Activated CD8-positive, alpha-beta T cell treated with anti-CD3 and anti-CD28 coated beads for 36 hours (primary cell): ENCODE measurements at regions of chr2 and their contacts with region 1.

Region 1: DNA sequence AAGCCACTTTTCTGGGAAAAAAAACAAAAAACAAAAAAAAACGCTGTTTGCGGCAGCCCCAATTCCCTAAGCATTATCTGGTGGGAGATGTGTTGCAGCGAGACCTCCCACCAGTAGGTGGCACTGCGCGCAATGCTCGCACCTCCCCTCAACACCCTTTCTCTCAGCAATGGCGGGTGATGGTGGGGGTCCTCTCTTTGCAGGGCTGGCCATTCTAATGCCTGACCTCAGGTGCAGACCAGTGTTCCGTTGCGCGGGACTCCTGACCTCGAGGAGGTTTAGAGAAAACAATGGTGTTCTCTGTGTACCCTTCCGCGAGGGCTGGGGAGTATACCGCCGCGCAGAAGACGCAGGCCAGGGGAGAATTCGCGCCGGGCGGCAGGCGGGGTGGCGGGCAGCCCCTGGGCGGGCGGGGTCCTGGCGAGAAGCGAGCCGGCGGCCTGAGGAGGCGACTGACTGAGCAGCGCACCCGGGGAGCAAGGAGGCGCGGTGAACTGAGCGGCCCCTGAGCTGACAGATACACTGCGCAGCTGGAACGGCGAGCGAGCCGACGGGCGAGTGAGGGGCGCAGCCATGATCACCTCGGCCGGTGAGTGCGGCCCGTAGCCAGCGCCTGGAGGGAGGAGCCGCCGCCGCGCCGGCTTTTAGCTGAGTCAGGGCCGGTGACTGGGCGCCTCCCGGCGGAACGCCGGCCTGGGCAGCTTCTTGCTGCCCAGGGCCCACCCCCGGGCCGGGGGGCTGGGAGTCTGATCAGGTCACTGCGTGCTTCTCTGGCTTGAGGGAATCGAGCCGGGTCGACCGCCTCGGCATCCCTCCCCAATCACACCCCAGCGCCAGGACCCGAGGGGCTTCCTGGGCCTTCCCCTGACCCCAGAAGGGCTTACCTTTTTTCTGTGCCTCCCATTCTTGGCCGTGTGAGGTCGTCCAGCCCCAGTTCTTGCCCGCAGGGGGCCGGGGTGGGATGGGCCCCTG is at the start of gene PSMD1:
- DNase-seq: peak; percentile 96
- ATAC-seq: peak; percentile 86
- H3K4me3 Mint-ChIP-seq: peak within 1 kb of the TSS; percentile 81
- H3K27ac Mint-ChIP-seq: peak within 1 kb of the TSS; percentile 100
- H3K4me1 Mint-ChIP-seq: peaks cover 48% of the 10 kb centered on the region
- H3K27me3 Mint-ChIP-seq: peaks cover 4% of the 10 kb centered on the region
- CTCF ChIP-seq: peak; percentile 93
- total RNA-seq, gene PSMD1: 106 to 114 TPM

Region 2: DNA sequence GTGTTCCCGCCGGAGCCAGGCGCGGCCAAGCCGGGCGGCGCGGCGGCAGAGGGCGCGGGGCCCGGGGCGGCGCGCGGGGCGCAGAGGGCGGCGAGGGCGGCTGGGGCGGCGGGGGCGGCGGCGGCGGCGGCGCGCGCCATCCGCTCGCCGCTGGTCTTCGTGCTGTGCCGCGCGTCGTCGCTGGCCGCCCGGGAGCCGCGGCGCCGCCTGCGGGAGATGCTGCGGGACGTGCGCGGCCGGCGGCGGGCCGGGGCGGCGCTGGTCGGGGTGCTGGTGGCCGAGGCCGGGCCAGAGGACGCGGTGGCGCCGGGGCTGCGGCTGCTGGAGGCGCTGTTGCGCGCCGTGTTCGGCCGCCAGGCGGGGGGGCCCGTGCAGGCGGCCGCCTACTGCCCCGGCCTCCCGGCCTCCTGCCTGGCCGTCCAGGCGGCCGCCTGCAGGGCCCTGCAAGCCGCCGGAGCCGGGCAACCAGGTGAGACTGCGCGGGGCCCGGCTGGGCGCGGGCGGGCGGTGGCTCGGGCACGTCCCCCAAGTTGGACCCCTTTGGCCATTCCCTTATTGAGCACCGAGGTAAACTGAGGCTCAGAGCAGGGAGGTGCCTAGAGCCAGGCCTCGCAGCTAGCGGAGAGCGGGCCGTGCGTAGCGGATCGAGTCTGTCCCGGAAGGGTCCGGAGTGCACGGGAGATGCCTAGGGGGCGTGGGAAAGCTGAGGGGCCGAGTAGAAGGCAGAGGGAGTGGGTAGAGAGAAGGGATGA is 18.8 kb before region 1 on chr2:
- CTCF ChIA-PET with region 1: interaction called, 13 read pairs
- POLR2A ChIA-PET with region 1: no interaction called
- intact Hi-C with region 1: no loop called
- DNase-seq: no peak
- ATAC-seq: peak; percentile 38
- H3K4me3 Mint-ChIP-seq: peak overlapping the region; percentile 53
- H3K27ac Mint-ChIP-seq: no peak overlapping the region
- H3K4me1 Mint-ChIP-seq: no peaks in the 10 kb centered on the region
- H3K27me3 Mint-ChIP-seq: peaks cover 57% of the 10 kb centered on the region
- CTCF ChIP-seq: no peak

Region 3: GRCh38 chr2:231068525-231069222 is 11.9 kb after region 1 on chr2:
- CTCF ChIA-PET with region 1: interaction called, 10 read pairs
- POLR2A ChIA-PET with region 1: interaction called, 9 read pairs
- intact Hi-C with region 1: no loop called
- DNase-seq: peak; percentile 17
- ATAC-seq: peak; percentile 67
- H3K4me3 Mint-ChIP-seq: no peak overlapping the region
- H3K27ac Mint-ChIP-seq: peak overlapping the region; percentile 40
- H3K4me1 Mint-ChIP-seq: peaks cover 11% of the 10 kb centered on the region
- H3K27me3 Mint-ChIP-seq: no peaks in the 10 kb centered on the region
- CTCF ChIP-seq: no peak